ENCODE measurements at regions of chr17 and their contacts with region 1.

Region 1: DNA sequence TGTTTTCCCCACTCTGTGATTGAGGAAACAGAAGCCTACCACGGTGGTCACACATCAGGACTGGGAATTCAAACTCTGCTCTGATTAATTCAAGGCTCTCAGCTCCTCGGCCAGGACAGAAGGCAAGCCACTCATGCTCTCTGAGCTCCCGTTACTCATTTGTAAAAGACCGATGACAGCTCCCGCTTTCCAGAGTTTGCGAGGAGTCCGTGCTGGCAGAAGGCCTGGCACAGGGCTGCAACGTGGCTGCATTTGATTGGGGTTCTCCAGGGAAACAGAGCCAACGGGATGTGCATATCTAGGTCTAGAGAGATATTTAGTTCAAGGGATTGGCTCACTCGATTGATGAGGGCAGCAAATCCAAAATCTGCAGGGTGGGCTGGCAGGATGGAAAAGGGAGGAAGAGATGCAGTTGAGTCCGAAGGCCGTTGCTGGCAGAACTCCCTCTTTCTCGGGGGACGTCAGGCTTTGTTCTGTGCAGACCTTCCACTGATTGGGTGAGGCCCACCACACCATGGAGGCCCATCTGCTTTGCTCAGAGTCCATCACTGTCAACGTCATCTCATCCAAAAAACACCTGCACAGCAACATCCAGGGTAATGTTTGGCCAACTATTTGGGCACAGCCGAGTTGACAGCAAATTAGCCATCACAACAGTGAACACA is 215.5 kb upstream of the RPL38 start:
- DNase-seq: no peak
- H3K4me3 Mint-ChIP-seq: no peak overlapping the region
- H3K27ac Mint-ChIP-seq: no peak overlapping the region
- H3K4me1 Mint-ChIP-seq: no peaks in the 10 kb centered on the region
- H3K27me3 Mint-ChIP-seq: peaks cover 16% of the 10 kb centered on the region
- CTCF ChIP-seq: no peak

Region 2: GRCh38 chr17:73976676-73977521 is 11.1 kb before region 1 on chr17:
- CTCF ChIA-PET with region 1: no interaction called
- POLR2A ChIA-PET with region 1: no interaction called
- intact Hi-C with region 1: no loop called
- DNase-seq: no peak
- H3K4me3 Mint-ChIP-seq: no peak overlapping the region
- H3K27ac Mint-ChIP-seq: no peak overlapping the region
- H3K4me1 Mint-ChIP-seq: no peaks in the 10 kb centered on the region
- H3K27me3 Mint-ChIP-seq: peaks cover 64% of the 10 kb centered on the region
- CTCF ChIP-seq: no peak

Region 3: GRCh38 chr17:73998653-73999645 is 11.0 kb after region 1 on chr17:
- CTCF ChIA-PET with region 1: interaction called, 10 read pairs
- POLR2A ChIA-PET with region 1: no interaction called
- intact Hi-C with region 1: no loop called
- DNase-seq: peak; percentile 51
- H3K4me3 Mint-ChIP-seq: no peak overlapping the region
- H3K27ac Mint-ChIP-seq: no peak overlapping the region
- H3K4me1 Mint-ChIP-seq: no peaks in the 10 kb centered on the region
- H3K27me3 Mint-ChIP-seq: peaks cover 37% of the 10 kb centered on the region
- CTCF ChIP-seq: peak; percentile 85

Region 4: DNA sequence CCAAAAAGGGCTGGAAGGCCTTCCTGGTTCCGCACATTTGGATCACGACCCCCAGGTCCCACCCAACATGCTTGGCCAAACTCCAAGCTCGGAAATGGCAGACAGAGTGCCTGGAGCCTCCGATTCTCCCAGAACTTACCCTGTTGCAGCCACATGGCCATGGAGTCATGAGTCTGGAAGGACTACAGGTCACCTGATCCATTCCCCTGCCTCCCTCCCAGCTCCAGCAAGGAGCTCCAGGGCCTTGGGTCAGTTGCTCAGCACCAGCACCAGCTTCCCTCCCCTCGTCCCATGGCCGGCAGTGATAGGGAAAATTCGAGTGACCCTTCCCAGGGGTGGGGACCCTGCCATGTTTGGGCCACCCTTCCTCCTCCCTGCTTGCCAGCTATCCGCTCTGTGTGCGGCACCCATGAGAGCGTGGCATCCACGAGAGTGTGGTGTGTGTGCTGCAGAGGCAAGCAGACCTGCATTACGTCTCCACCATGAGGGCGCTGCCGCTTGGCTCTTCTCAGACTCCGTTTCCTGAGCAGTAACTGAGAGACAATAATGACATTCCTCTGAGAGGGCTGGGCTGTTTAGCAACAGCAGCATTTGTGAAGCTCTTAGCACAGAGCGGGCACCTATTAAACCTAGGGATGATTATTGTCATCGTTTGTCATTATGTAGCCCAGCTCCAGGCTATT is 194.2 kb after region 1 on chr17:
- CTCF ChIA-PET with region 1: no interaction called
- POLR2A ChIA-PET with region 1: no interaction called
- intact Hi-C with region 1: no loop called
- DNase-seq: no peak
- H3K4me3 Mint-ChIP-seq: no peak overlapping the region
- H3K27ac Mint-ChIP-seq: no peak overlapping the region
- H3K4me1 Mint-ChIP-seq: no peaks in the 10 kb centered on the region
- H3K27me3 Mint-ChIP-seq: peaks cover 57% of the 10 kb centered on the region
- CTCF ChIP-seq: no peak